ENCODE measurements at regions of chr15 and their contacts with region 1.

Region 1: DNA sequence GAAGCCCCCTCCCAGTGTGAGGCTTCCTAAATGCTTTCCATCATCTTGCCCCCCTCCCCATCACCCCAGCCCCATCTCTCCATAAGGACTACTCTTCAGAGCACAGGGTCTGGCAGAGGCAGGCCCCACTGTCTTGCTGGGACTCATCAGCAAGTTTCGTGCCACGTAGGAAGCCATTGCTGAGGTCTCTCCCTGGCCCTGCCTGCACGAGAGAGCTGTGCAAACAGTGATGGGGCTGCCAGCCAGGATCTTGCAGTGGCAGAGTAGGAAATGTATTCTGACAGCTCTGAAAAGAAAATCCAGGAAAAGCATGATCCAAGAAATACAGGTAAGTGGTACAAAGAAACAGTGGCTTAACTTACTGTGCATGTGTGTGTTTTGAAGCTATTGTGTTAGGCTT is 22.6 kb downstream of the ISL2 start:
- DNase-seq: no peak
- H3K4me3 ChIP-seq: no peak overlapping the region
- H3K27ac ChIP-seq: no peak overlapping the region
- H3K4me1 ChIP-seq: no peaks in the 10 kb centered on the region
- H3K27me3 ChIP-seq: no peaks in the 10 kb centered on the region
- CTCF ChIP-seq: no peak

Region 2: GRCh38 chr15:76533060-76533822 is 174.1 kb after region 1 on chr15:
- CTCF ChIA-PET with region 1: interaction called, 20 read pairs
- POLR2A ChIA-PET with region 1: no interaction called
- intact Hi-C with region 1: no loop called
- DNase-seq: no peak
- H3K4me3 ChIP-seq: no peak overlapping the region
- H3K27ac ChIP-seq: no peak overlapping the region
- H3K4me1 ChIP-seq: peaks cover 4% of the 10 kb centered on the region
- H3K27me3 ChIP-seq: no peaks in the 10 kb centered on the region
- CTCF ChIP-seq: no peak

Measured in A673 (cell line).